Endothelial cell of umbilical vein (primary cell): ENCODE measurements at regions of chr4 and their contacts with region 1.

Region 1: GRCh38 chr4:146342600-146343192 is 128.4 kb downstream of the REELD1 start:
- DNase-seq: peak; percentile 70
- H3K4me3 ChIP-seq: no peak overlapping the region
- H3K27ac ChIP-seq: no peak overlapping the region
- H3K4me1 ChIP-seq: peaks cover 5% of the 10 kb centered on the region
- H3K27me3 ChIP-seq: no peaks in the 10 kb centered on the region
- CTCF ChIP-seq: peak in 1 of 2 donors; percentile 19
- POLR2A ChIP-seq: no peak

Region 2: GRCh38 chr4:145956288-145956890 is 386.3 kb before region 1 on chr4:
- CTCF ChIA-PET with region 1: no interaction called
- POLR2A ChIA-PET with region 1: no interaction called
- dilution Hi-C with region 1: no loop called
- intact Hi-C with region 1: loop called (anchors 5 kb)
- DNase-seq: peak; percentile 43
- H3K4me3 ChIP-seq: no peak overlapping the region
- H3K27ac ChIP-seq: no peak overlapping the region
- H3K4me1 ChIP-seq: peaks cover 10% of the 10 kb centered on the region
- H3K27me3 ChIP-seq: no peaks in the 10 kb centered on the region
- CTCF ChIP-seq: peak; percentile 68 to 77
- POLR2A ChIP-seq: no peak

Region 3: DNA sequence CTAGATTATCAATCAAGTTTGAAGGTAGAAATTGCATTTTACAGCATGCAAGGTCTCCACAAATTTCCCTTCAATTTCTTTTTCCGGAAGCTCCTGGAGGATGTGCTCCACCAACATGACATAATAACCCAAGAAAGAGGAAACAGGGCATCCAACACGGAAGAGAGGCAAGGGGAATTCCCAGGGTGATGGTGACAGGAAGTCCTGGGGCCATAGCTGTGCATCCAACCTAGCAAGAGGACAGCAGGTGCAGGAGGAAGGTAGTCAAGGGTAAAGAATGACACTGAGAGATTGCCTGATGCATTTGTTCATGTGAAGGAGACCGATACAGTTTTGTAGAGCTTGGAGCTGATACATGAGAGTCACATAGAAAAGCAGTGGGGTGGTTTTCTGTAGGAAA is 282.8 kb before region 1 on chr4:
- CTCF ChIA-PET with region 1: no interaction called
- POLR2A ChIA-PET with region 1: no interaction called
- dilution Hi-C with region 1: no loop called
- intact Hi-C with region 1: no loop called
- DNase-seq: no peak
- H3K4me3 ChIP-seq: no peak overlapping the region
- H3K27ac ChIP-seq: no peak overlapping the region
- H3K4me1 ChIP-seq: no peaks in the 10 kb centered on the region
- H3K27me3 ChIP-seq: peaks cover 0 to 7% of the 10 kb centered on the region in 2 experiments
- CTCF ChIP-seq: no peak
- POLR2A ChIP-seq: no peak

Region 4: DNA sequence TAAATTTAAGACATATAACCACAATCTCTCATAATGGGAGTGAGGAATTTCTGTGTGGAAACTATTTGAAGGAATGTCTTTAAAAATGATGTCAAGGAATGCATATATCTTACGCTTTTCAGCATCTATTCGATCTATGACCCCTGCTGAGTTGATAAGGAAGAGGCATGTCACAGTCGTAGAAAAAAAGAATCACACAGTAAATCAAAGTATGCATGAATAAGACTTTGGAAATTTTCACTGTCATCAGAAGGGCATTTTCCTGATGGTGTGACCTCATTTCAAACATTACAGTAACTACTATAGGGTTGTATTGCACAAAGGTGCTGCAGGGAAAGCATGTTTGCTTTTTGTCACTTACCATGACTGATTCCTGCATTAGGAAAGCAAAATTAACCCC is 86.8 kb before region 1 on chr4:
- CTCF ChIA-PET with region 1: no interaction called
- POLR2A ChIA-PET with region 1: no interaction called
- dilution Hi-C with region 1: no loop called
- intact Hi-C with region 1: no loop called
- DNase-seq: peak; percentile 36
- H3K4me3 ChIP-seq: no peak overlapping the region
- H3K27ac ChIP-seq: no peak overlapping the region
- H3K4me1 ChIP-seq: peaks cover 2% of the 10 kb centered on the region
- H3K27me3 ChIP-seq: no peaks in the 10 kb centered on the region
- CTCF ChIP-seq: no peak
- POLR2A ChIP-seq: no peak

Region 5: DNA sequence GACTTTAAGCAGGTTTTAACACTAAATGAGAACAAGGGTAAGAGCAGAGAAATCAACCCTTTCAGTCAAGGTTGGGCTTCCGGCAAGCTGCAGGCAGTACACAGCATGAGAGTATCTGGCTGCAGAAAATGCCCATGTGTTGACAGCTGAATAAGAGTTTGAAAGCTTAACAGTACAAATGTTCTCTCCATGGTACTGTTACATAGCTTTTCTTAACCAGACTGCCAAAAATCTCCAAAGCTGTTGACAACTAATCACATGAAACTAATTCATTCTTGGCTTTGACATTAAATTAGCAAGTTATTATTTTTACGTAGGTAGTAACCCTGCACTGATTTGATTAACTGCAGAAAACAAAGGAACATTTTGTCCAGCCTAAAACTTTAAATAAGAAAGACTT is 25.5 kb after region 1 on chr4:
- CTCF ChIA-PET with region 1: interaction called, 18 read pairs
- POLR2A ChIA-PET with region 1: no interaction called
- dilution Hi-C with region 1: no loop called
- intact Hi-C with region 1: no loop called
- DNase-seq: peak; percentile 80
- H3K4me3 ChIP-seq: no peak overlapping the region
- H3K27ac ChIP-seq: peak overlapping the region; percentile 59
- H3K4me1 ChIP-seq: peaks cover 47% of the 10 kb centered on the region
- H3K27me3 ChIP-seq: no peaks in the 10 kb centered on the region
- CTCF ChIP-seq: no peak
- POLR2A ChIP-seq: no peak

Region 6: GRCh38 chr4:146522098-146522868 is 179.6 kb after region 1 on chr4:
- CTCF ChIA-PET with region 1: interaction called, 35 read pairs
- POLR2A ChIA-PET with region 1: no interaction called
- dilution Hi-C with region 1: no loop called
- intact Hi-C with region 1: loop called (anchors 1 kb)
- DNase-seq: peak; percentile 85
- H3K4me3 ChIP-seq: peak overlapping the region; percentile 84 to 99 (median 90)
- H3K27ac ChIP-seq: peak overlapping the region; percentile 73
- H3K4me1 ChIP-seq: peaks cover 17% of the 10 kb centered on the region
- H3K27me3 ChIP-seq: no peaks in the 10 kb centered on the region
- CTCF ChIP-seq: no peak
- POLR2A ChIP-seq: peak; percentile 38

Region 7: GRCh38 chr4:146654687-146655520 is 312.2 kb after region 1 on chr4:
- CTCF ChIA-PET with region 1: interaction called, 3 read pairs
- POLR2A ChIA-PET with region 1: no interaction called
- dilution Hi-C with region 1: no loop called
- intact Hi-C with region 1: loop called (anchors 5 kb)
- DNase-seq: peak; percentile 24
- H3K4me3 ChIP-seq: peak overlapping the region; percentile 18 to 61 (median 30)
- H3K27ac ChIP-seq: no peak overlapping the region
- H3K4me1 ChIP-seq: peaks cover 8% of the 10 kb centered on the region
- H3K27me3 ChIP-seq: peaks cover 64 to 66% of the 10 kb centered on the region in 2 experiments
- CTCF ChIP-seq: peak in 1 of 2 donors; percentile 22
- POLR2A ChIP-seq: no peak

Region 8: GRCh38 chr4:147096667-147097604 is 754.2 kb after region 1 on chr4:
- CTCF ChIA-PET with region 1: interaction called, 50 read pairs
- POLR2A ChIA-PET with region 1: no interaction called
- dilution Hi-C with region 1: no loop called
- intact Hi-C with region 1: loop called (anchors 2 kb)
- DNase-seq: peak; percentile 63
- H3K4me3 ChIP-seq: no peak overlapping the region
- H3K27ac ChIP-seq: no peak overlapping the region
- H3K4me1 ChIP-seq: no peaks in the 10 kb centered on the region
- H3K27me3 ChIP-seq: peaks cover 9 to 19% of the 10 kb centered on the region in 2 experiments
- CTCF ChIP-seq: peak; percentile 26 to 32
- POLR2A ChIP-seq: no peak